ENCODE measurements at regions of chr10 and their contacts with region 1.

Region 1: DNA sequence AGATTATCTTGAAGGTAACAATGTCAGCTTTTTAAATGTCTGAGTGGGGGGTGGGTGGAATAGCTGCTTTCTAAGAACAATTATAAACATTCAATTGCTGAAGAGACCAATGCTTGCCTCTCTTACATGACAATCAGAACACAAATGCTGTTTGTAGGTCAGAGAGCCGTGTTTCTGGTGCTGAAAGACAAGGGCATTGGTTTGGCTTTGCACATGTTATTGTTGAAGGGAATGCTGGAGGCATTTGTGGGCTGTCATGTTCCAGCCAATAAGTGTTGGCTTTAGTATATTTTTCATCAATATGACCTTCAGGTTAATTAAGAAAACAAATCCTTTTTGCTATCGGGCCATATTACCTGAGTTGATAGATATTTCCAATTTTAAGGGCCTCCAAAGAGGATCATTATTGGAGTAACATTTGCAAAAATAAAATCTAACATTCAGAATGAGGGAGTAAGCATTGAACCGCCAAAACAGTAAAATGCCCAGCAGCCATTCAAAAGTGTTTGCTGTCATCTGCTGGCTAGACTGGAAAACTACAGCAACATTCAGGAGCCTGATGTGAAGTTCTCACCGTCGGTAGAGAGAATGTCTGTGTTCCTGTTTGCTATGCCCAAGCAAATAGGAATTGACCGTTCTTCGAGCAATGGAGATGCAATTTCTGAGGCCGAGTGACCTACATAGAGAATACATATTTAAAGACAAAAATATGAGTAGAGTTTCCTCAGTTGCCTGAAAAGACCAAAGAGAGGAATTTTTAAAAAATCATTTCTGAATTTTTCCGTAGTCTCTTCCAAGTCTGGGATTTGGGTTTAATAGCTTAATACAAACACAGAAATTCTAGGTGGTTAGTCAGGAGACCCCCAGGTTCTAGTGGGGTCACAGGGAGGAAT is 118.9 kb downstream of the APBB1IP start:
- DNase-seq: no peak

Region 2: GRCh38 chr10:25875556-25876165 is 681.3 kb before region 1 on chr10:
- intact Hi-C with region 1: loop called (anchors 5 kb)
- DNase-seq: no peak

Region 3: DNA sequence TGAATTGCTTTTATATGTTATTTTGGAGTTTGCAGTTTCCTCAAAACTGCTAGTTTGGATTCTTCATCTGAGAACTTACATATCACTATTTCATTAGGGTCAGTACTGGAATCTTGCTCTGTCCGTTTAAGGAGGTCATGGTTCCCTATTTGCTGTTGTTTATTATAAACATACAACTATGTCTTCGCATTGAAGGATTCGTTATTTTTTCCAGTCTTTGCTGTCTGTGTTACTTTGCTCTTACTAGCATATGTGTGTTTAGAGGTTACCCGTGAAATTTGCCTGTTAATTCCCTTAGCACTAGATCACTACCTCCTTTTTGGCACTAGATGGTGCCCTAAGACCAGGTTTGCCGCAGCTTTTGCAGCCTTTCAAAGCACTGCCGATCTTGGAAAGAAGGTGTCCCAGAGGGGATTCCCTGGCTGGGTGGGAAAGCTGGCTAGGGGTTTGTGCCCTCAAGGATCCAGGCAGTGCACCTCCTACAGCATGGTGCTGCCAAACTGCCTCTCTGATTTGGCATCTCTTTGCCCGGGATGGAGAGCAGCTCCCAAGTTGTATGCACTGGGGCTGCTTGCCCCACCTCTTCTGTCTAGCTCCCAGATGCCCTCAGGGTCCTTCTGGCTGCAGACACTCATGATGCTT is 221.9 kb before region 1 on chr10:
- intact Hi-C with region 1: loop called (anchors 5 kb)
- DNase-seq: peak; percentile 77

Measured in cardiac septum (tissue), 1 donor.